B cell (primary cell): ENCODE measurements at regions of chr16 and their contacts with region 1.

Region 1: GRCh38 chr16:46973207-46973995 is at the start of gene DNAJA2:
- DNase-seq: peak; percentile 96
- ATAC-seq: peak; percentile 94
- H3K4me3 ChIP-seq: peak within 1 kb of the TSS; percentile 77 to 94 (median 85)
- H3K4me3 Mint-ChIP-seq: peak within 1 kb of the TSS; percentile 94
- H3K27ac ChIP-seq: peak within 1 kb of the TSS; percentile 96 to 97
- H3K27ac Mint-ChIP-seq: peak within 1 kb of the TSS; percentile 97
- H3K4me1 ChIP-seq: peaks cover 21 to 22% of the 10 kb centered on the region in 2 donors
- H3K4me1 Mint-ChIP-seq: peaks cover 41% of the 10 kb centered on the region
- H3K27me3 ChIP-seq: no peaks in the 10 kb centered on the region
- H3K27me3 Mint-ChIP-seq: no peaks in the 10 kb centered on the region
- CTCF ChIP-seq: no peak
- total RNA-seq, gene DNAJA2: 57.0 and 57.3 TPM in 2 replicates

Region 2: DNA sequence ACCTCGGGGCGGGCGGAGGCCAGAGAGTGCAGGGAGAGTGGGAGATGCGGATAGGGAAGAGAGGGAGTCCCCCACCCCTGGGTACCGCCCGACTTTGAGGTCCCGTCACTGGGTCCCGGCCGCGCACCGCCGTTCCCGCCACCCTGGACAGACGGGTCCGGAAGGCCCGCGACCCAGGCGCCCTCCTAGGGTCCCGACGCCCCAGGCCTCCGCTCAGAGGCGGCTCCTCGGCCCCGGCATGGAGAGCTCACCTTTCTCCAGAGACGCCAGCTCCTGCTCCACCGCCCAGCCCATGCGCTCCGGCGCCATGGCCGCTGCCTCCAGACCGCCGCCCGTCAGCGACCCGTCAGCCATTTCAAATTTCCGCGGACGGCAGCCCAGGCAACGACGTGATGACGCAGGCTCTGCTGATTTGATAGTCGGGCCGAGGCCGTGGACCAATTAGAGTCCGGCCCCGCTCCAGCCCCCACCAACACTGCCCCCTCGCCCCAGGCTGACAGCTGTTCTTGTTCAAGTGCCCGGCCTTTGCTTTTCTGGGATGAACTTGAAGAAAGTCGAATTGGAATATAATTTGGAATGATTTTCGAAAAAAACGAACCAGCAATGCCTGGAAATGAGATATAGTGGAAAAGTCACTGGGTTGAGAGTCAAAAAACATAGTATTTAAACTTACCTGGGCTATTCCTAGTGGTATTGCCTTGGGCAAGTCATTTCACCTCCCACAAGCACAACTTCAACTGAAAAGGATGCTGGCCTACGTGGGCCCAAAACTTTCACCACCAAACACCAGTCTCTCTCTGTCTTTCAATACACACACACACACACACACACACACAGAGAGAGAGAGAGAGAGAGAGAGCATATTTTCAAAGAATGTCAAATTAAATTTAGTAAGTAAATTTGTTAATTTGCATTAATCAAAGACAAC is 352.1 kb before region 1 on chr16 and contains the start of gene SHCBP1:
- CTCF ChIA-PET with region 1: no interaction called
- POLR2A ChIA-PET with region 1: no interaction called
- intact Hi-C with region 1: loop called (anchors 2 kb)
- DNase-seq: peak; percentile 78
- ATAC-seq: peak; percentile 94
- H3K4me3 ChIP-seq: peak within 1 kb of the TSS; percentile 54 to 78 (median 70)
- H3K4me3 Mint-ChIP-seq: peak within 1 kb of the TSS; percentile 97
- H3K27ac ChIP-seq: peak within 1 kb of the TSS; percentile 39 to 48
- H3K27ac Mint-ChIP-seq: peak within 1 kb of the TSS; percentile 73
- H3K4me1 ChIP-seq: peaks cover 15 to 16% of the 10 kb centered on the region in 2 donors
- H3K4me1 Mint-ChIP-seq: peaks cover 28% of the 10 kb centered on the region
- H3K27me3 ChIP-seq: no peaks in the 10 kb centered on the region
- H3K27me3 Mint-ChIP-seq: no peaks in the 10 kb centered on the region
- CTCF ChIP-seq: no peak
- total RNA-seq, gene SHCBP1: 1.7 and 4.2 TPM in 2 replicates

Region 3: GRCh38 chr16:46689365-46690280 is 283.8 kb before region 1 on chr16 and contains the start of gene ORC6:
- CTCF ChIA-PET with region 1: no interaction called
- POLR2A ChIA-PET with region 1: no interaction called
- intact Hi-C with region 1: loop called (anchors 1 kb)
- DNase-seq: peak; percentile 100
- ATAC-seq: peak; percentile 74
- H3K4me3 ChIP-seq: peak within 1 kb of the TSS; percentile 97 to 98 (median 98)
- H3K4me3 Mint-ChIP-seq: no peak within 1 kb of the TSS
- H3K27ac ChIP-seq: peak within 1 kb of the TSS; percentile 94 to 95
- H3K27ac Mint-ChIP-seq: no peak within 1 kb of the TSS
- H3K4me1 ChIP-seq: peaks cover 48 to 50% of the 10 kb centered on the region in 2 donors
- H3K4me1 Mint-ChIP-seq: peaks cover 34% of the 10 kb centered on the region
- H3K27me3 ChIP-seq: no peaks in the 10 kb centered on the region
- H3K27me3 Mint-ChIP-seq: no peaks in the 10 kb centered on the region
- CTCF ChIP-seq: peak; percentile 61
- total RNA-seq, gene ORC6: 4.7 and 7.0 TPM in 2 replicates

Region 4: GRCh38 chr16:46830902-46831647 is 142.3 kb before region 1 on chr16 and contains the start of gene C16orf87:
- CTCF ChIA-PET with region 1: no interaction called
- POLR2A ChIA-PET with region 1: interaction called, 4 read pairs
- intact Hi-C with region 1: loop called (anchors 1 kb)
- DNase-seq: peak; percentile 97
- ATAC-seq: peak; percentile 92
- H3K4me3 ChIP-seq: peak within 1 kb of the TSS; percentile 75 to 88 (median 82)
- H3K4me3 Mint-ChIP-seq: peak within 1 kb of the TSS; percentile 95
- H3K27ac ChIP-seq: peak within 1 kb of the TSS; percentile 55 to 85
- H3K27ac Mint-ChIP-seq: peak within 1 kb of the TSS; percentile 93
- H3K4me1 ChIP-seq: peaks cover 34 to 47% of the 10 kb centered on the region in 2 donors
- H3K4me1 Mint-ChIP-seq: peaks cover 59% of the 10 kb centered on the region
- H3K27me3 ChIP-seq: no peaks in the 10 kb centered on the region
- H3K27me3 Mint-ChIP-seq: no peaks in the 10 kb centered on the region
- CTCF ChIP-seq: no peak
- total RNA-seq, gene C16orf87: 11.3 and 12.5 TPM in 2 replicates

Region 5: DNA sequence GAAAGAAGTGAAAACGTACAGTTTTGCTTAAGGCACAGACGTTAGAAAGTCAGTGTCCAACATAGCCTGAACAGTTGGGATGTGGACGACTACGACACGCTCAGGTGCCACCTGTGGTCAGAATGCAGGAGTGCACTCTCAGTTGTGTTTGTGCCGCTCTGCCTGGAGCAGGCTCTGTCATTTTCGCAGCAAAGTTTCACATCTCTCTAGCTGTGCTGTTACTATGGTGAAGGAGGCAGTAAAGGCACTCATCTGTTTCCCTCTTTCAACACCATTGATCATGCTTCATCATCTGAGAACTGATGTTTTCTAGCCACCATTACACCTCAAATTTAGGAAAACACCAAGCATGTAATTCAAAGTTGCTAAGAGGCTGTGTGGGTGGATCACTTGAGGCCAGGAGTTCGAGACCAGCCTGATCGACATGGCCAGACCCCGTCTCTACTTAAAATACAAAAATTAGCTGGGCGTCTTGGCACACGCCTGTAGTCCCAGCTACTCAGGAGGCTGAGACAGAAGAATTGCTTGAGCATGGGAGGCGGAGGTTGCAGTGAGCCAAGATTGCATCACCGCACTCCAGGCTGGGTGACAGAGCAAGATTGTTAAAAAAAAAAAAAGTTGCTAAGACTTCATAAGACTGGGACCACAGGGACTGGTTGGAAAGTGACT is 45.0 kb after region 1 on chr16:
- CTCF ChIA-PET with region 1: interaction called, 6 read pairs
- POLR2A ChIA-PET with region 1: interaction called, 4 read pairs
- intact Hi-C with region 1: loop called (anchors 1 kb)
- DNase-seq: peak; percentile 91
- ATAC-seq: peak; percentile 99
- H3K4me3 ChIP-seq: no peak overlapping the region
- H3K4me3 Mint-ChIP-seq: peak overlapping the region; percentile 62
- H3K27ac ChIP-seq: peak overlapping the region; percentile 55 to 65
- H3K27ac Mint-ChIP-seq: peak overlapping the region; percentile 58
- H3K4me1 ChIP-seq: peaks cover 23 to 29% of the 10 kb centered on the region in 2 donors
- H3K4me1 Mint-ChIP-seq: peaks cover 24% of the 10 kb centered on the region
- H3K27me3 ChIP-seq: no peaks in the 10 kb centered on the region
- H3K27me3 Mint-ChIP-seq: no peaks in the 10 kb centered on the region
- CTCF ChIP-seq: peak; percentile 78

Region 6: DNA sequence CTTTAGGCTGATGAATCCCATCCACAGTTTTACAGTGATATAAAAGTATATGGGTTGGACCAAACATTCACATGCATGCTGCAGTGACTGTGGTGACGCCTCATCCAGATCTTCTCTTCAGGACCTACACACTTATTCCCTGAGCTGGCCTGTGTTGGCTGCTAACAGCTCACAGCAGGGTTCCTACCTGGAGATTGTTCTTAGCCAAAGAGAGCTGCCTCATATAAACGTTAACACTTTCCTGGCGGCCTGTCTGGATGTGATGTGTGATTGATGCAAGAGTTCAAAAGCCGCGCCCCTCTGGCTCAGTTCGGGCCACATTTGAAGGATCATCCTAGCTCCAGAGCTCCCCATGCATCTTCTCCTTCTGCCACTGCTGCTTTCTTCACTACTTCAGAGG is 263.3 kb after region 1 on chr16:
- CTCF ChIA-PET with region 1: no interaction called
- POLR2A ChIA-PET with region 1: no interaction called
- intact Hi-C with region 1: no loop called
- DNase-seq: no peak
- ATAC-seq: no peak
- H3K4me3 ChIP-seq: no peak overlapping the region
- H3K4me3 Mint-ChIP-seq: no peak overlapping the region
- H3K27ac ChIP-seq: no peak overlapping the region
- H3K27ac Mint-ChIP-seq: no peak overlapping the region
- H3K4me1 ChIP-seq: no peaks in the 10 kb centered on the region
- H3K4me1 Mint-ChIP-seq: no peaks in the 10 kb centered on the region
- H3K27me3 ChIP-seq: no peaks in the 10 kb centered on the region
- H3K27me3 Mint-ChIP-seq: no peaks in the 10 kb centered on the region
- CTCF ChIP-seq: no peak

Region 7: DNA sequence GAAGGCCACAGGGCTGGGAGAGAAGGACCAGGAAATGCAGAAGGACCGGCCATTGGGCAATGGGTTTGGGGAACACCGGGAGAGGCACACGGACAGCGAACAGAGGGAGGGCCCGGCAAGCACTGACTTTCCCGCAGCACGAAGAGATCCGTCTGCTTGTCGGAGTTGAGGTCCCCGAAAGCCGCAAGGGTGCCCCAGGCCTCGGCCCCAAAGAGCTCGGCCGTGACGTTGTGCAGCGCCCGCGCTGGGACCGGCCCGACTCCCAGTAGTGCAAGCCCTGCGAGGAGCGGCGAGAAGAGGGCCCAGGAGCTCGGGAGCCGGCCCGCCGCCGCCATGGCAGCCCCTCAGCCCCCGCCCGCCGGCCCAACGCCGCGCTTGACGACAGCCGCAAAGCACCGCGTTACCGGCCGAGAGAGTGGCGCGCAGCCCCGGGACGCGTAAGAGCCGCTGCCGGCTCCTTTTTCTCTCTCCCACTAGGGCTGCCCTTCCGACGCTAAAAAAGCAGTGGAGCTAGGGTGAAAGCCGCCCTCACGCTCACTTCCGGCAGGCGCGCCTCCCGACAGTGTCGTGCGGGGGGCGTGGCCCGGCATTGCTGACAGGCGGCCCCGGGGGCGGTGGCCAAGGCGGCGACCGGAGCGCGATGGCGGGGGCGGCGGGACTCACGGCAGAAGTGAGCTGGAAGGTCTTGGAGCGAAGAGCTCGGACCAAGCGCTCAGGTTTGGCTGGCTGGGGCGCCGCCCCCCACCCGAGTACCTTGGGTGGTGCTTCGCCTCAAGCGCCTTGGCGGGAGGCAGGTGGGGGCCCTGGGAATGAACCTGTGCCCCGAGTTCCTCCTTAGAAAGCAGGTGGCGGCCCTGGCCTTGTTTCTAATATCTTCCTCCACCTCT is 487.6 kb after region 1 on chr16 and contains the starts of genes ITFG1 and PHKB:
- CTCF ChIA-PET with region 1: no interaction called
- POLR2A ChIA-PET with region 1: no interaction called
- intact Hi-C with region 1: loop called (anchors 1 kb)
- DNase-seq: peak; percentile 97
- ATAC-seq: peak; percentile 89
- H3K4me3 ChIP-seq: peak within 1 kb of the TSS; percentile 73 to 93 (median 88)
- H3K4me3 Mint-ChIP-seq: peak within 1 kb of the TSS; percentile 98
- H3K27ac ChIP-seq: peak within 1 kb of the TSS; percentile 94 to 97
- H3K27ac Mint-ChIP-seq: peak within 1 kb of the TSS; percentile 97
- H3K4me1 ChIP-seq: peaks cover 40 to 53% of the 10 kb centered on the region in 2 donors
- H3K4me1 Mint-ChIP-seq: peaks cover 68% of the 10 kb centered on the region
- H3K27me3 ChIP-seq: no peaks in the 10 kb centered on the region
- H3K27me3 Mint-ChIP-seq: no peaks in the 10 kb centered on the region
- CTCF ChIP-seq: no peak
- total RNA-seq, gene ITFG1: 40.4 and 47.5 TPM in 2 replicates
- total RNA-seq, gene PHKB: 223 and 228 TPM in 2 replicates

Region 8: DNA sequence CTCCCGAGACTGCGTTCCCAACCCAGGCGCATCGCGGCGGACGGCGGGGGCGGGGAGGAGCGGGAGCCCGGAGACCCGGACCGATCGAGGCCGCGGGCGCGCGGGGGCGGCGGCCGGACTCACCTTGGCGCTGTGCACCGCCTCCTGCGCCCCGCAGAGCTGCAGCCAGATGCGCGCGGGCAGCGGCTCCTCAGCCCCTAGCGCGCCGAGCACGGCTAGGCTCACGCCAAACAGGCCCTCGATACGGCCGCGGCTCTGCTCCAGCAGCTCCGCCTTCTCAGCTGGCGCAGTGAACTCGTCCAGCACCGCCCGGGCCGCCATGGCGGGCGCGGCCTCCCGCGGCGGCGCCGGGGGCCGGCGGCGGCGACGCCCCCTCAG is 1636.2 kb after region 1 on chr16:
- CTCF ChIA-PET with region 1: no interaction called
- POLR2A ChIA-PET with region 1: no interaction called
- intact Hi-C with region 1: loop called (anchors 5 kb)
- DNase-seq: no peak
- ATAC-seq: peak; percentile 68
- H3K4me3 ChIP-seq: peak overlapping the region; percentile 76 to 96 (median 77)
- H3K4me3 Mint-ChIP-seq: peak overlapping the region; percentile 92
- H3K27ac ChIP-seq: peak overlapping the region in 1 of 2 donors; percentile 58
- H3K27ac Mint-ChIP-seq: peak overlapping the region; percentile 86
- H3K4me1 ChIP-seq: peaks cover 51 to 53% of the 10 kb centered on the region in 2 donors
- H3K4me1 Mint-ChIP-seq: peaks cover 38% of the 10 kb centered on the region
- H3K27me3 ChIP-seq: no peaks in the 10 kb centered on the region
- H3K27me3 Mint-ChIP-seq: no peaks in the 10 kb centered on the region
- CTCF ChIP-seq: no peak